Common myeloid progenitor, CD34-positive (primary cell): ENCODE measurements at regions of chr17 and their contacts with region 1.

Region 1: DNA sequence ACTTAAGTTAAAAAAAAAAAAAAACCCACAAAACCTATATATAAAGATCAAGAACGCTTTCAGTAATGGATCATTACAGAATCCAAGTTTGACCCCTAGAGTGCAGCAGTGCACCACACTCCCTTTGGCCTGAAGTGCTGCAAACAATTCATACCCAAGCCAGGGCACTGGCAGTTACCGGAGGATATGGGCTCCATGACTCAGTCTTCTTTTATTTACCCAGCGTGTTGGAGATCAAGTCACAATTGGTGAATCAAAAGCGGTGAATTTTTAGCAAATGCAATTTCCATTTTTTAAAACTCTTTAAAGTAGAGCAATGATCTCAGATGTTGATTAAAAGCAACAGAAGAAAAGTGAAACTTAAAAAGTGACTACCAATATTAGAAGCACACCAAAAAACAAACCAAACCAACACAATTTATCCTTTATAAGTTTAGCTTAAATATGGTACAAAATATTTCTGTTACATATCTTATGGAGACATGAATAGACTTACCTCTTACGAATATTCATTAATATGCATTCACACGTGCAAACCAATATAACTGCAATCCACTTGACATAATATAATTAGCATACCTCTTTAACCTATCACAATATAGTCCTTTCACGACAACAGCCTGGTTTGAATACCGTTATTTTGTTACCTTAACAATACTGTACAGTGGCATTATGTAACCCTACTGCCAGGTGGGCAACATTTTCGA is 46.3 kb downstream of the ZNF652 start:
- DNase-seq: peak; percentile 84 to 92 (median 91)
- H3K4me3 ChIP-seq: peak overlapping the region in 3 of 7 experiments; percentile 11 to 51 (median 21)
- H3K27ac ChIP-seq: peak overlapping the region in 1 of 2 experiments; percentile 62
- H3K4me1 ChIP-seq: peaks cover 11 to 29% (median 23%) of the 10 kb centered on the region in 4 experiments
- H3K27me3 ChIP-seq: no peaks in the 10 kb centered on the region

Region 2: DNA sequence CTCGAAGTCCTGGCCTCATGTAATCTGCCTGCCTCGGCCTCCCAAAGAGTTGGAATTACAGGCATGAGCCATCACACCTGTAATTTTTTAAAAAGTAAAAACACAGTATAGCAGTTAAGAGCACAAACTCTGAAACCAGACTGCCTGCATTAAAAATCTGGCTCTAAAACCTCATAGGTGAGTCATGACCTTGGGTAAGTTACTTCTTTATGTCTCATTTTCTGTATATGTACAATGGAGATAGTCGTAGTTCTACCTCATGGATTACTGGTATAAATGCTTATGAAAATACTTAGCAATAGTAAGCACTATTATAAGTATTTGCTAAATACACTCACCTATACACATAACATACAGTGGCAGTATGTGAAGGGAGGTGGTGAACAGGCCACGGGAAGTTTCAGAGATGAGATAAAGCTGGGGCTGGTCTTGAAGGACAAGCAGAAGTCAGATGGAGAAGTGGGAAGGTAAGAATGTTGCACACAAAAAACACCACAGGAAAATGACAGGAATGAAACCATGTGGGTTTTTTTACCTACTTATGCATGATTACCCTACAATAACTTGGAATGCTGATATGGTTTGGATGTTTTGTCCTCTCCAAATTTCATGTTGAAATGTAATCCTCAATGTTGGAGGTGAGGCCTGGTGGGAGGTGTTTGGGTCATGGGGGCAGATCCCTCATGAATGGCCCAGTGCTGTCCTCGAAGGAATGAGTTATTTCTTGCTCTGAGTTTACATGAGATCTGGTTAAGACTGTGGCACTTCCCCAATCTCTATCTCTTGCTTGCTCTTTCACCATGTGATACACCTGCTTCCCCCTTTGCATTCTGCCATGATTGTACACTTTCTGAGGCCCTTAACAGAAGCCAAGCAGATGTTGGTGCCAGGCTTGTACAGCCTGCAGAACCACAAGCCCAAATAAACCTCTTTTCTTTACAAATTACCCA is 12.4 kb after region 1 on chr17:
- CTCF ChIA-PET with region 1: interaction called, 16 read pairs
- POLR2A ChIA-PET with region 1: no interaction called
- DNase-seq: peak in 2 of 3 donors; percentile 92 to 95
- H3K4me3 ChIP-seq: no peak overlapping the region
- H3K27ac ChIP-seq: peak overlapping the region in 1 of 2 experiments; percentile 9
- H3K4me1 ChIP-seq: peaks cover 7 to 20% (median 9%) of the 10 kb centered on the region in 4 experiments
- H3K27me3 ChIP-seq: no peaks in the 10 kb centered on the region

Region 3: DNA sequence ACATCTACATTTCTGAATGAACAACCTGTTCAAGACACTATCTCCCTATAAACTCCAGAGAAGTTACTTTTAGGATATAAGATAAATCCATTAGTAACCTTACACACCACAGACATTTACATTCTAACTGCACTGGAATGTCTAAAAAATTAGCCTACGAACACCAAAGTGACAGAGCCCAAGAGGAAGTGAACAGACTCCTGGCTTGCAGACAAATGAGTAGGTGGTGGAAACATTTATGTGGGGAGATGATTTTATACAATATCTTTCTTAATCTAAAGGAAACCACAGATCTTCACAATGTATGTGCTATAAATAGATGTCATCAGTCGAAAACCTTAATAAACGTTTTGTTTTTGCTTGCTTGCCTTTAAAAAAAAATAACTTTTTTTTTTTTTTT is 27.6 kb after region 1 on chr17:
- CTCF ChIA-PET with region 1: interaction called, 17 read pairs
- POLR2A ChIA-PET with region 1: no interaction called
- DNase-seq: peak in 2 of 3 donors; percentile 63 to 79
- H3K4me3 ChIP-seq: peak overlapping the region in 3 of 7 experiments; percentile 23 to 58 (median 51)
- H3K27ac ChIP-seq: no peak overlapping the region
- H3K4me1 ChIP-seq: peaks cover 8 to 26% (median 20%) of the 10 kb centered on the region in 4 experiments
- H3K27me3 ChIP-seq: no peaks in the 10 kb centered on the region

Region 4: DNA sequence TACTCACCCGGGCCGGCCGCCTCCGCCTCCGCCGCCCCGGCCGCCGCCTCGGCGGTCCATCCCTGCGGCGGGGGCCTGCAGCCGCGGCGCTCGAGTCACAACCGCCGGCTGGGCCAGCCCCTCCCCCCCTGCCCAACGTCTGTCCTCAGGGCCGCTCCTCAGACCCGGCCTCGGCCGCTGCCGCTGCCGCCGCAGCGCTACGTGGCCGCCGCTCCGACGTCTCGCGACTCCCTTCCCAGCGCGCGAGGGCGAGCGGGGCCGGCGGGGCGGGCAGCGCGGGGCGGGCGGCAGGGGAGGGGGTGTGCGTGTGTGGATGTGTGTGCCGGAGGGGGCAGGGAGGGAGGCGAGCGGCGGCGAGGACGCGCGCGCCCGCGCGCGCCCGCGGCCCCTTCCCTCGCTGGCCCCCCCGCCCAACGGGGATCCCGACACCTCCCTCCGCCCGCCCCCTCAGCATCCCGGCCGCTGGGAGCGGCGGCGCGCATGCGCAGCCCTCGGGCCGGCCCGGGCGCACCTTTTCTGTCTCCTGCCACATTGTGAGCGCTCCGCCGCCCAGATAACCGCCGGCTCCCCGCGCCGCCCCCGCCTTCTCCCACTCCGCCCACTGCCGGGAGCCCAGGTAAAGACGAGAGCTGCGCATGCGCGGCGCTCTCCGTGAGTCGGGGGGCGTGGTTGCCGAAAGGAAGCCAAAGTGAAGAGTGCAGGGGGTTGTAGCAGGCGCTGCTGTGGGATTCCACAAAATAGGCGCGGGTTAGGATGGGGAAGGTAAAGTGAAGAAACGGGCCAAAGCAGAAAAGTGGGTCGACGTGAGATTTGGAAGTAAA is 46.4 kb after region 1 on chr17 and contains the start of gene ZNF652:
- CTCF ChIA-PET with region 1: interaction called, 63 read pairs
- POLR2A ChIA-PET with region 1: interaction called, 3 read pairs
- DNase-seq: peak; percentile 86 to 92 (median 90)
- H3K4me3 ChIP-seq: peak within 1 kb of the TSS; percentile 68 to 88 (median 79)
- H3K27ac ChIP-seq: peak within 1 kb of the TSS; percentile 15 to 74
- H3K4me1 ChIP-seq: peaks cover 26 to 47% (median 37%) of the 10 kb centered on the region in 4 experiments
- H3K27me3 ChIP-seq: no peaks in the 10 kb centered on the region

Region 5: GRCh38 chr17:49370971-49371834 is 55.5 kb after region 1 on chr17:
- CTCF ChIA-PET with region 1: interaction called, 63 read pairs
- POLR2A ChIA-PET with region 1: no interaction called
- DNase-seq: no peak
- H3K4me3 ChIP-seq: no peak overlapping the region
- H3K27ac ChIP-seq: no peak overlapping the region
- H3K4me1 ChIP-seq: peaks cover 0 to 8% (median 5%) of the 10 kb centered on the region in 4 experiments
- H3K27me3 ChIP-seq: no peaks in the 10 kb centered on the region

Region 6: GRCh38 chr17:49390548-49391324 is 75.0 kb after region 1 on chr17:
- CTCF ChIA-PET with region 1: interaction called, 249 read pairs
- POLR2A ChIA-PET with region 1: no interaction called
- DNase-seq: peak in 2 of 3 donors; percentile 54 to 63
- H3K4me3 ChIP-seq: peak overlapping the region in 3 of 7 experiments; percentile 1 to 50 (median 39)
- H3K27ac ChIP-seq: peak overlapping the region in 1 of 2 experiments; percentile 39
- H3K4me1 ChIP-seq: peaks cover 36 to 66% (median 55%) of the 10 kb centered on the region in 4 experiments
- H3K27me3 ChIP-seq: no peaks in the 10 kb centered on the region

Region 7: DNA sequence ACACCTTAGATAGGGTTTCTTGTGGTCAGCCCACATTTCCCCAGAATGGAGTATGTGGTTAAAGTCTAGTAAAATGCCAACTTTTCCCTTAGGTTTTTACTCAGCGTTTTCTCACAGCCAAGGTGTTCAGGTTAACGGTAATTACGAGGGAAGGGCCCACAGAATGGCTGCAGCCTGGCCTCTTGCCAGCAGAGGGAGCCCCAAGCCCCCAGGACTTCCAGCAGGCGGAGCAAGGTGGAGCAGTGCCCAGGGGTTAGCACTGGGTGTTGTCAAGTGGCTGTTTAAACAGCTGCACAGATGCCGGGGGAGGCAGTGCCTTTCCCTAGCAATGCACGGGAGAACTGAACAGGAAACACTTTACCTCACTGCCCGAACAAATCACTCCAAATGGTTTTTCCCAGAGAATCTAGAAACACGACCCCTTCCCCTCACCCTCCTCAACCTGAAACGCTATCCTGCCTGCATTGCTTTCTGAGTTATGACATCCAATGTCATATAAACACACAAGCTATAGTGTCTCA is 92.3 kb after region 1 on chr17:
- CTCF ChIA-PET with region 1: interaction called, 12 read pairs
- POLR2A ChIA-PET with region 1: no interaction called
- DNase-seq: peak; percentile 82 to 91 (median 88)
- H3K4me3 ChIP-seq: peak overlapping the region in 1 of 7 experiments; percentile 14
- H3K27ac ChIP-seq: peak overlapping the region in 1 of 2 experiments; percentile 2
- H3K4me1 ChIP-seq: peaks cover 5 to 62% (median 57%) of the 10 kb centered on the region in 4 experiments
- H3K27me3 ChIP-seq: no peaks in the 10 kb centered on the region